ENCODE measurements at regions of chr3 and their contacts with region 1.

Region 1: GRCh38 chr3:107106316-107106715 is 270.9 kb upstream of the CCDC54 start:
- DNase-seq: no peak
- ATAC-seq: no peak
- H3K4me3 ChIP-seq: no peak overlapping the region
- H3K4me3 Mint-ChIP-seq: no peak overlapping the region
- H3K27ac ChIP-seq: no peak overlapping the region
- H3K27ac Mint-ChIP-seq: no peak overlapping the region
- H3K4me1 ChIP-seq: no peaks in the 10 kb centered on the region
- H3K4me1 Mint-ChIP-seq: no peaks in the 10 kb centered on the region
- H3K27me3 ChIP-seq: peaks cover 0 to 3% of the 10 kb centered on the region in 2 experiments
- H3K27me3 Mint-ChIP-seq: peaks cover 1 to 12% of the 10 kb centered on the region in 2 donors

Region 2: GRCh38 chr3:107008213-107008612 is 98.1 kb before region 1 on chr3:
- CTCF ChIA-PET with region 1: interaction called in 1 of 2 experiments, 12 read pairs
- POLR2A ChIA-PET with region 1: no interaction called
- DNase-seq: no peak
- ATAC-seq: no peak
- H3K4me3 ChIP-seq: no peak overlapping the region
- H3K4me3 Mint-ChIP-seq: no peak overlapping the region
- H3K27ac ChIP-seq: no peak overlapping the region
- H3K27ac Mint-ChIP-seq: no peak overlapping the region
- H3K4me1 ChIP-seq: no peaks in the 10 kb centered on the region
- H3K4me1 Mint-ChIP-seq: no peaks in the 10 kb centered on the region
- H3K27me3 ChIP-seq: no peaks in the 10 kb centered on the region
- H3K27me3 Mint-ChIP-seq: no peaks in the 10 kb centered on the region

Measured in T-cell (primary cell).